GM18951 (cell line): ENCODE measurements at regions of chr12 and their contacts with region 1.

Region 1: DNA sequence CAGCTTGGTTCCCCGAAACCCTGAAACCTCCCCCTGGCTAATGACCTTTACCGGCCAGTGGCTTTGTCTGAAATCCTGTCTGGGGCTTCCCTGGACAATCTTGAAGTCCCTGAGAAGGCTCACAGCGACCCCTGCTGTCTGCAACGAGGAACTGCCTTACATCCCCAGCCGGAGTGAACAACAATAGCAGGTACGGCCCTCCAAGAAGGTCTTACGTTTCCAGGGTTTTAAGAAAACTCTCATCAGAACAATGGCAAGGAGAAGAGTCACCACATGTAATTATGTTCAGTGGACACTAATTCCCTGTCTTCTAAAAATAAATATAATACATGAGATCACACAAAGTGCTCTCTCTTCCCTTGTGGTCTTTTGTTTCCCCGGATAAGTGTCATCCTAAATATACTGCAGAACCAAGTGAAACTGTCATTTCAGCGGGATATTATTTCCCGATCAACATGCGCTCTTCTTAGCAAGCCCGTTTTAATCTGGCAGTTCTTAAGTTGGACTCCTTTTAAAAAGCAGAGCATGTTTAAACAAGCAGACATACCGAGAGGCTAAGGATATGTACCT is 53.3 kb downstream of the RBM19 start:
- POLR2A ChIP-seq: no peak

Region 2: DNA sequence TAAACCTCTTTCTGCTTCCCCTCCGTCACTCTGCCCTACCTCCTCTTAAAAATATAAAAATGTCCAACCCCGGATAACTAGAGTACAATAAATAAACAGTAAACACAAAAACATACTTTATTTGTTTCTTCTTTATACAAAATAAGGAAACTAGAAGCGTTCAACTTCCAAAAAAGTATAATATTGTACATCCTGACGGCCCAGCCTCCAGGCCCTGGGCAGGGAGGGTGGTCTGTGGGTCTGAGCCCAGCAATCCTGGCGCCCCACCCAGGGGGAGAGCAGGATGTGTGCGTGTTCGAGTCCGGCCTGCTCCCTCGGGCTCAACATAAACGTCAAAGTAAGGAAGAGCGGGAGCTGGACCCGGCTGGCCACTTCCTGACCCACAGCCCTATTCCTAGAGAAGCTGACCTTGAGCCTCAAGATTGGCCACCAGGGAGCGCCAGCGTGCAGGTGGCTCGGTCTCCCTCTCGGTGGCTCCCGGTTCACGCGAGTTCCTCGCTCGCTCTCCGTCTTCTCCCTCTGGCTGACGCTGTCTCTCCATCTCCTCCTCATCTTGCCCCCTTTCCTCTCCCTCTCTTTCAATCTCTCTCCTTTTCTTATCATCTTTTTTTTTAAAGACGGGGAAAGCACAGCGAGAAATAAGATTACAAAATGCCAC is 450.6 kb before region 1 on chr12:
- in situ Hi-C with region 1: loop called (anchors 25 kb)
- POLR2A ChIP-seq: no peak

Region 3: GRCh38 chr12:114668151-114668885 is 755.5 kb after region 1 on chr12:
- in situ Hi-C with region 1: no loop called
- POLR2A ChIP-seq: no peak